ENCODE measurements at regions of chr5 and their contacts with region 1.

Region 1: DNA sequence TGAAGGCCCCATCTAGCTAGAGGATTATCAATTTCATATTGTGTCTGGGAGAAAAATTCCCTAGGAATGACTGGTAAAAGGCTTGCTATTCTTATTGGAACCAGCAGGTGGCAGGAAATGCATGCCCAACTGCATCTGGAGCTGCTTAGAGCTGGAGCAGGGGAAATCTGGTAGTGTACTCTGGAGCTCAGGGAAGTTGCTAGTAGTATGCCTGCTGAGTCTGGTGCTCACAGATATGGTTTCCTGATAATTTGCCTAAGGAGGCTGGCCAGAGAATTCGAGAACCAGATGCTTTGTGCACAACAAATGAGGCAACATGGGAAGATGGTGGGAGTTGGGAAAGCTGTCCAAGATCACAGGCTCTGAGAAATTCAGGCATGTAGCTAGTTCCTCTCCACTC is 53.7 kb downstream of the G3BP1 start:
- DNase-seq: peak; percentile 6 to 36 (median 32)
- H3K4me3 ChIP-seq: no peak overlapping the region
- H3K4me3 Mint-ChIP-seq: no peak overlapping the region
- H3K27ac ChIP-seq: no peak overlapping the region
- H3K27ac Mint-ChIP-seq: no peak overlapping the region
- H3K4me1 ChIP-seq: no peaks in the 10 kb centered on the region
- H3K4me1 Mint-ChIP-seq: peaks cover 4% of the 10 kb centered on the region
- H3K27me3 ChIP-seq: no peaks in the 10 kb centered on the region
- H3K27me3 Mint-ChIP-seq: peaks cover 0 to 1% (median 0%) of the 10 kb centered on the region in 3 donors
- CTCF ChIP-seq: peak; percentile 76

Region 2: GRCh38 chr5:152505442-152506042 is 680.1 kb after region 1 on chr5:
- intact Hi-C with region 1: loop called (anchors 5 to 10 kb)
- DNase-seq: peak in 2 of 3 donors; percentile 24 to 25
- H3K4me3 ChIP-seq: no peak overlapping the region
- H3K4me3 Mint-ChIP-seq: no peak overlapping the region
- H3K27ac ChIP-seq: no peak overlapping the region
- H3K27ac Mint-ChIP-seq: no peak overlapping the region
- H3K4me1 ChIP-seq: no peaks in the 10 kb centered on the region
- H3K4me1 Mint-ChIP-seq: peaks cover 2% of the 10 kb centered on the region
- H3K27me3 ChIP-seq: no peaks in the 10 kb centered on the region
- H3K27me3 Mint-ChIP-seq: peaks cover 2 to 3% (median 2%) of the 10 kb centered on the region in 3 donors
- CTCF ChIP-seq: peak; percentile 61